Cardiac septum (tissue), 1 donor: ENCODE measurements at regions of chr14 and their contacts with region 1.

Region 1: GRCh38 chr14:88385345-88386101 is at the start of gene SPATA7:
- DNase-seq: peak; percentile 97
- total RNA-seq, gene SPATA7: 7.2 TPM

Region 2: DNA sequence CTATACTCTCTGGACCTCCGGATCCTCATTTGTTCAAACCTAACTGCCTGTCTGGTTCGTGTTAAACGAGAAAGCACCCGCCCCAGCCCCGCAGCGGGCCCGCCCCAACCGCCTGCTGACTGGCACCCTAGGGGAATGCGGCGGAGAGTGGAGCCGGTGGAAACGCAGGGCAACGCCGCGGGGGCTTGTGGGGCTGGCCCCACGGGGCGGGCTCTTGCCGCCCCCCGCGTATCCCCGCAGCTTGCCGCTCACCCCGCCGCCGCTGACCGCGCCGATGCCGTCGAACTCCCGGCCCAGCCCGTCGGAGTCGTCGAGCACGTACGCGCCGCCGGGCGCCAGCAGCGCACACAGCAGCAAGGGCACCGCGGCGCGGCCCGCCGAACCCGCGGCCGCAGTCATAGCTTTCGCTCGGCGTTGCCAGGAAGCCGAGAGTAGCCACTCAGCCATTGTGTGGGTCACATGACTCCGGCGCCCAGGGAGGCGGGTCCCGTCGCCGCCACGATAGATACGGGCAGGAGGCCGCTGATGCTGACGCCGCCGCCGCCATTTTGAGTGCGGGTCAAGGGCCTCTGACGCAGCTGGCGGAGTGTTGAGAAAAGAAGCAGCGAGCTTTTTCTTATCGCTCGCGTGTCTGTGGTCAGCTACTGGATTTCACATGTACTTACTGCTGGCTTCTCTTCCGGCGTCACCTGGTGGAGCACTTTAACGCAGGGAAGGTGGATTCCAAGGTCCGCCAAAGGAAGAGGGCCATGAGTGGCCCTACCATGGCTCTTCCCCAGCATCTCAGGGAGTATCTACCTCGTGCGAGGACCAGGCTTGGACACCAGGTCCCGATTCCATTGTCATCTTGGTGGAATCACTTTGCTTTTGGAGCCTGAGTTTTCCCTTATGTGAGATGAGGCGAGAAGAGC is 392.6 kb before region 1 on chr14 and contains the start of gene GALC:
- intact Hi-C with region 1: loop called (anchors 10 kb)
- DNase-seq: peak; percentile 98
- total RNA-seq, gene GALC: 13.9 TPM

Region 3: DNA sequence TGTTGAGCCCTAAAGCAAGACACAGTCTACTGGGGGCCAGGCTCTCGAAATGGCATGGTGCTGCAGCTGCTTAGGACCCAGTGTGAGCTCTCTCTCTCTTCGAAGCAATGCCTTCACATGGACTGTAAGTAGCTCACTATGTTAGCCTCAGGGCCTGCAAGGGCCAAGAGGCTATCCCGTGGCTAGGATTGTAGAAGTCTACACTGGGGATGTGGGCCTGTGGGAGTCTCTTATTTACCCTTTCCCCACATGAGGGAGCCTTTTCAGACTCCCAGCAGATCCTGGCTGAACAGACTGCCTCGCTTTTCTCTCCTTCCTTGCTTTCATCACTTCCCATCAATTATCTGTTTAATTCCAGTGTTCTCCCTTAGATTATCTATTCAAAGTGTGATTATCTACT is 279.1 kb before region 1 on chr14:
- intact Hi-C with region 1: no loop called
- DNase-seq: no peak

Region 4: GRCh38 chr14:88189417-88190191 is 195.9 kb before region 1 on chr14:
- intact Hi-C with region 1: loop called (anchors 10 kb)
- DNase-seq: no peak

Region 5: DNA sequence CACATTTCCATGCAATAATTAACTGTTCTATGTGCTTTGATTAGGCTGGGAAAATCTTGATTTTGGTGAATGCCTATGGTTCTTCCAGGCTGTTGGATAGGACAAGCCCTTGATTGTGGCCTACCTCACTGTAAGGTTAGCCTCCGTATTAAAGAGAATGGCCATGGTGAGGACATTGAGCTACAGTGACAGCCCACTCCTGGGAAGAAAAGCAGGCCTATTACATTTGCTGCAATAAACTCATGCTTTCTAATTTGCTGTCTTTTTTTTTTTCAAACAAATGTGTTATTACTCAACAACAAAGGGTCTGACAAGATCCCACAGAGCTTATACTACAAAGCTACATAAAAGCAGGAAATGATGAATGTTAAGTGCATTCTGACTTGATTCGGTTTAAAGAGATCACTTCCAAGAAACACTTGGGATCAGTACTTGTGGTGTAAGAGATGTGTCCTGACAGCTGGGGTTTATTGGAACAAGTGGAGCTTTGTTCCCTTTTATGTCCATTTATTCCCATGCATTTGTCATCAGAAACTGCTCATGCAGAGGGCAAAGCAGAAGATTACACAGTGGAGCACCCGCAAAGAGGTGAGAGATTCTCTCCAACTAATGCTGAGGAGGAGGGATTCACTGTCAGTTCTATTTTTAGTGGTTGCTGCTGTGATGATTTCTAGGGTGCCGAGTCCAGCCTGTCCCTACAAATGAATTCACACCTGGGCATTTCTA is 33.4 kb before region 1 on chr14:
- intact Hi-C with region 1: no loop called
- DNase-seq: no peak

Region 6: GRCh38 chr14:88562831-88563686 is 177.5 kb after region 1 on chr14 and contains the start of gene ZC3H14:
- intact Hi-C with region 1: loop called (anchors 5 kb)
- DNase-seq: peak; percentile 91
- total RNA-seq, gene ZC3H14: 39.7 TPM